B cell (primary cell): ENCODE measurements at regions of chr5 and their contacts with region 1.

Region 1: DNA sequence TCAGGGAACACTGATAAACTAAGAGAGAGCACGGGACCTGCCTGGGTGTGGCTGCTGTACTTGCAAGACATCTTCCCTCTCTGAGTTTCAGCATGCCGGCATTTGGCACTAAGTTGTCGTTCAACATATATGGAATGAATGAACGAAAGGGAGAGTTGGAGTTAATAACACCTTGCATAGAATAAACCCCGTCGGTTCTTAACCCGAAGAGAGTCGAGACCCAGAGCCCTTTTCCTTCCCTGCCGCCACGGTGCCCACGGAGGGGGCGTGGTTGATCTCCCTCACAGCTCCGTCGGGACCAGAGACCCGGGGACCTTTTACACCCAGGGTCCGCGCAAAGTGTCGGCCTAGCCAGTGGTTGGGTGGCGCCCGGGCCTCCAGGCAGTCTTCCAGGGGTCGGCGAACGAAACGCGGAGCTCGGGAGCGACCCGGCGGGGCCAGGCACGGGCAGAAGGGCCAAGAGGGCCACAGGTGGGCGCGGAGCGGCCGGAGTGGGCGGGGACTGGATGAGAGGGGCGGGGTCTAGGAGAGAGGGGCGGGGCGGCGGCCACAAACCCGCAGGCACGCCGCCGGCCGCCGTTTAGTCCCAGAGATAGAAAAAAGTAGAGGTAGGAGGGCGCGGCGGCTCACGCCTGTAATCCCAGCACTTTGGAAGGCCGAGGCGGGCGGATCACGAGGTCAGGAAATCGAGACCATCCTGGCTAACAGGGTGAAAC is 735 bp upstream of the RPL26L1 start:
- DNase-seq: peak; percentile 82
- ATAC-seq: peak; percentile 73
- H3K4me3 ChIP-seq: peak overlapping the region; percentile 44 to 97 (median 85)
- H3K4me3 Mint-ChIP-seq: peak overlapping the region; percentile 97
- H3K27ac ChIP-seq: peak overlapping the region; percentile 54 to 81
- H3K27ac Mint-ChIP-seq: peak overlapping the region; percentile 96
- H3K4me1 ChIP-seq: peaks cover 8 to 18% of the 10 kb centered on the region in 2 donors
- H3K4me1 Mint-ChIP-seq: peaks cover 23% of the 10 kb centered on the region
- H3K27me3 ChIP-seq: no peaks in the 10 kb centered on the region
- H3K27me3 Mint-ChIP-seq: no peaks in the 10 kb centered on the region
- CTCF ChIP-seq: no peak

Region 2: GRCh38 chr5:172245703-172246125 is 712.8 kb before region 1 on chr5:
- CTCF ChIA-PET with region 1: no interaction called
- POLR2A ChIA-PET with region 1: no interaction called
- intact Hi-C with region 1: no loop called
- DNase-seq: no peak
- ATAC-seq: no peak
- H3K4me3 ChIP-seq: no peak overlapping the region
- H3K4me3 Mint-ChIP-seq: no peak overlapping the region
- H3K27ac ChIP-seq: no peak overlapping the region
- H3K27ac Mint-ChIP-seq: no peak overlapping the region
- H3K4me1 ChIP-seq: no peaks in the 10 kb centered on the region
- H3K4me1 Mint-ChIP-seq: peaks cover 2% of the 10 kb centered on the region
- H3K27me3 ChIP-seq: no peaks in the 10 kb centered on the region
- H3K27me3 Mint-ChIP-seq: no peaks in the 10 kb centered on the region
- CTCF ChIP-seq: no peak

Region 3: GRCh38 chr5:172764849-172765765 is 193.4 kb before region 1 on chr5:
- CTCF ChIA-PET with region 1: no interaction called
- POLR2A ChIA-PET with region 1: interaction called, 4 read pairs
- intact Hi-C with region 1: loop called (anchors 1 kb)
- DNase-seq: peak; percentile 99
- ATAC-seq: peak; percentile 78
- H3K4me3 ChIP-seq: peak overlapping the region; percentile 27 to 74 (median 52)
- H3K4me3 Mint-ChIP-seq: peak overlapping the region; percentile 83
- H3K27ac ChIP-seq: peak overlapping the region; percentile 92 to 94
- H3K27ac Mint-ChIP-seq: peak overlapping the region; percentile 94
- H3K4me1 ChIP-seq: peaks cover 33 to 42% of the 10 kb centered on the region in 2 donors
- H3K4me1 Mint-ChIP-seq: peaks cover 59% of the 10 kb centered on the region
- H3K27me3 ChIP-seq: no peaks in the 10 kb centered on the region
- H3K27me3 Mint-ChIP-seq: no peaks in the 10 kb centered on the region
- CTCF ChIP-seq: no peak

Region 4: DNA sequence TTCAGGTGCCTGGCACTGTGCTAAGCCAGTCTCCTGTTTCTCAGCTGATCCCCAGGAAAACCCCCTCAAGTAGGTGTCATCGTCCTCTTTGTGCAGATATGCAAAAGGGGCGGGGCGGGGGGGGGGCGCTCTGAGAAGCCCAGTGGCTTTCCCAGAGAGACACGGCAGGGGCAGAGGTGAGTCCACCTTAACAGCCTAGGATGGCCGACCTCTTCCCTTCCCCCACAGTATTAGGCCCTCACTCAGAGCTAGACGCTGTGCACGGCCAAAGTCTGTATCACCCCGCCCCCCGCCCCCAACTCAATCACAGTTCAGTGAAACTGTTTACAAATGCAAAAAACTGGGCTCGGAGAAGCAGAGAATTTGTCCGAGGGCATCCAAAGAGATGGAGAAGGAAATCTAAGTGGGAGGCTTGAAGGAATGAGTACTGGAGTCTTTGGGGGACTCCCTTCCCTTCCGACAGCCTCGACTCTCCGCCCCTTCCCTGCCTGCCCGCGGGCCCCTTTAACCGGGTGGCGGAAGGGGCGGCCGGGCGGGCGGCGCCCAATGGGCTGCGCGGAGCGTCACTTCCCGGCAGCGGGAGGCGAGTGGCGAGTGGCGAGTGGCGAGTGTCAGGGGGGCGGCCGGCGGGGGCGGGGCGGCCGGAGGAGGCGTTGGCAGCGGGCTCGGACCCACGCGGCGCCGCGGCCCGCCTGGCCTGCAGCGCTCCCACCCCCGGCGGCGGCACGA is 124.6 kb before region 1 on chr5 and contains the start of gene ERGIC1:
- CTCF ChIA-PET with region 1: no interaction called
- POLR2A ChIA-PET with region 1: no interaction called
- intact Hi-C with region 1: loop called (anchors 2 kb)
- DNase-seq: peak; percentile 86
- ATAC-seq: peak; percentile 74
- H3K4me3 ChIP-seq: peak within 1 kb of the TSS; percentile 62 to 90 (median 69)
- H3K4me3 Mint-ChIP-seq: peak within 1 kb of the TSS; percentile 90
- H3K27ac ChIP-seq: peak within 1 kb of the TSS; percentile 95 to 98
- H3K27ac Mint-ChIP-seq: peak within 1 kb of the TSS; percentile 96
- H3K4me1 ChIP-seq: peaks cover 42 to 52% of the 10 kb centered on the region in 2 donors
- H3K4me1 Mint-ChIP-seq: peaks cover 48% of the 10 kb centered on the region
- H3K27me3 ChIP-seq: no peaks in the 10 kb centered on the region
- H3K27me3 Mint-ChIP-seq: no peaks in the 10 kb centered on the region
- CTCF ChIP-seq: no peak
- total RNA-seq, gene ERGIC1: 132 and 140 TPM in 2 replicates

Region 5: GRCh38 chr5:172984243-172984953 is 25.9 kb after region 1 on chr5:
- CTCF ChIA-PET with region 1: interaction called, 6 read pairs
- POLR2A ChIA-PET with region 1: interaction called, 13 read pairs
- intact Hi-C with region 1: loop called (anchors 1 kb)
- DNase-seq: peak; percentile 82
- ATAC-seq: peak; percentile 56
- H3K4me3 ChIP-seq: peak overlapping the region; percentile 96 to 99 (median 96)
- H3K4me3 Mint-ChIP-seq: peak overlapping the region; percentile 98
- H3K27ac ChIP-seq: peak overlapping the region; percentile 93 to 97
- H3K27ac Mint-ChIP-seq: peak overlapping the region; percentile 99
- H3K4me1 ChIP-seq: peaks cover 15 to 23% of the 10 kb centered on the region in 2 donors
- H3K4me1 Mint-ChIP-seq: peaks cover 45% of the 10 kb centered on the region
- H3K27me3 ChIP-seq: no peaks in the 10 kb centered on the region
- H3K27me3 Mint-ChIP-seq: no peaks in the 10 kb centered on the region
- CTCF ChIP-seq: peak; percentile 70

Region 6: GRCh38 chr5:172999372-172999973 is 41.0 kb after region 1 on chr5:
- CTCF ChIA-PET with region 1: no interaction called
- POLR2A ChIA-PET with region 1: no interaction called
- intact Hi-C with region 1: no loop called
- DNase-seq: no peak
- ATAC-seq: no peak
- H3K4me3 ChIP-seq: no peak overlapping the region
- H3K4me3 Mint-ChIP-seq: no peak overlapping the region
- H3K27ac ChIP-seq: no peak overlapping the region
- H3K27ac Mint-ChIP-seq: peak overlapping the region; percentile 34
- H3K4me1 ChIP-seq: peaks cover 25 to 26% of the 10 kb centered on the region in 2 donors
- H3K4me1 Mint-ChIP-seq: peaks cover 50% of the 10 kb centered on the region
- H3K27me3 ChIP-seq: no peaks in the 10 kb centered on the region
- H3K27me3 Mint-ChIP-seq: no peaks in the 10 kb centered on the region
- CTCF ChIP-seq: no peak

Region 7: GRCh38 chr5:173065155-173065554 is 106.7 kb after region 1 on chr5:
- CTCF ChIA-PET with region 1: no interaction called
- POLR2A ChIA-PET with region 1: no interaction called
- intact Hi-C with region 1: no loop called
- DNase-seq: no peak
- ATAC-seq: no peak
- H3K4me3 ChIP-seq: no peak overlapping the region
- H3K4me3 Mint-ChIP-seq: peak overlapping the region; percentile 0
- H3K27ac ChIP-seq: peak overlapping the region; percentile 11 to 61
- H3K27ac Mint-ChIP-seq: peak overlapping the region; percentile 21
- H3K4me1 ChIP-seq: peaks cover 24 to 27% of the 10 kb centered on the region in 2 donors
- H3K4me1 Mint-ChIP-seq: peaks cover 62% of the 10 kb centered on the region
- H3K27me3 ChIP-seq: no peaks in the 10 kb centered on the region
- H3K27me3 Mint-ChIP-seq: no peaks in the 10 kb centered on the region
- CTCF ChIP-seq: no peak

Region 8: DNA sequence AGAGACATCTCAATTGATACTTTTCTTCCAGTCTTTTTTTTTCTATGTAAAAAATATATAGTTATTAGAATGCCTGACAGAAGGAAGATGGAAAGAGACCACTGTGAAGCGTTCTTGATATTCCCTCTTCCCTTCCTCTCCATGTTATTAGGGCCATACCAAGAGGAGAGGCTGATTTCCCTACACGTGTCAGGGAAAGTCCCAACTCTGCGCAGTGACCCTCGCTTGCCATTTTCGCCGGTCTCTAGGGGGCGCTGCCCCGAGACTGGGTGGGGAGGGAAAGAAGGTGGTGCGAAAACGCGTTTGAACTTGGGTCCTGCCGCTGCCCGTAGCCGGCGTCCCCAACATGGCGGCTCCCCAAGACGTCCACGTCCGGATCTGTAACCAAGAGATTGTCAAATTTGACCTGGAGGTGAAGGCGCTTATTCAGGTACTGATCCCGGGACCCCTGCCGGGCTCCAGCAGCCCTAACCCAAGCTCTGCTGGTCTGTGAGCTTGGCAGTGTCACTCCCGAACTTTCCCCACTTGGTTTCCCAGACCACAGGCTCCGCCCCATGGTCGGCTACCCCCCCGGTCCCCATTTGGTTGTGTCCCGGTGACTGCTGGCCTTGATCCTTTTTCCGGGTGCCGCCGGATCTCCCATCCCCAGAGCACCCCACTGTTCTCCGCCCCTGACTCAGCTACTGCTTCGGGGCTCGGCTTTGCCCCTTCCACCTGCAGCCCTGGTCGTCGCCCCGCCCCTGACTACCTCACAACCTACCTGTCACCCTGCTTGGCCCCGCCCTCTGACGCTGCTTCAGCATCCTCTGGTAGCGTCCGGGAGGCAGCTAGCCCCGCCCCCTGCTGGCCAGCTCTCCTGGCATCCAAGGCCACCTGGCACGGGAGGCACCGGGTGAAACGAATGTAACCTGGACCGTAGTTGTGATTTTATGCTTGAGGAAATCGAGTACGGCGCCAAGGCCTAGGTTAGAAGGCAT is 186.0 kb after region 1 on chr5 and contains the start of gene BNIP1:
- CTCF ChIA-PET with region 1: interaction called, 3 read pairs
- POLR2A ChIA-PET with region 1: no interaction called
- intact Hi-C with region 1: loop called (anchors 1 kb)
- DNase-seq: peak; percentile 97
- ATAC-seq: peak; percentile 90
- H3K4me3 ChIP-seq: peak within 1 kb of the TSS; percentile 79 to 100 (median 97)
- H3K4me3 Mint-ChIP-seq: peak within 1 kb of the TSS; percentile 98
- H3K27ac ChIP-seq: peak within 1 kb of the TSS; percentile 90 to 95
- H3K27ac Mint-ChIP-seq: peak within 1 kb of the TSS; percentile 98
- H3K4me1 ChIP-seq: peaks cover 3 to 8% of the 10 kb centered on the region in 2 donors
- H3K4me1 Mint-ChIP-seq: peaks cover 8% of the 10 kb centered on the region
- H3K27me3 ChIP-seq: no peaks in the 10 kb centered on the region
- H3K27me3 Mint-ChIP-seq: no peaks in the 10 kb centered on the region
- CTCF ChIP-seq: peak; percentile 81
- total RNA-seq, gene BNIP1: 8.0 and 10.0 TPM in 2 replicates